ENCODE measurements at regions of chr6 and their contacts with region 1.

Region 1: GRCh38 chr6:123316733-123317323 is 319.9 kb downstream of the TRDN start:
- DNase-seq: no peak
- ATAC-seq: no peak
- H3K4me3 Mint-ChIP-seq: no peak overlapping the region
- H3K27ac Mint-ChIP-seq: no peak overlapping the region
- H3K4me1 Mint-ChIP-seq: no peaks in the 10 kb centered on the region
- H3K27me3 Mint-ChIP-seq: no peaks in the 10 kb centered on the region
- CTCF ChIP-seq: no peak

Region 2: GRCh38 chr6:122381497-122382265 is 935.1 kb before region 1 on chr6:
- CTCF ChIA-PET with region 1: no interaction called
- POLR2A ChIA-PET with region 1: no interaction called
- intact Hi-C with region 1: loop called (anchors 5 kb)
- DNase-seq: no peak
- ATAC-seq: peak; percentile 77
- H3K4me3 Mint-ChIP-seq: no peak overlapping the region
- H3K27ac Mint-ChIP-seq: no peak overlapping the region
- H3K4me1 Mint-ChIP-seq: no peaks in the 10 kb centered on the region
- H3K27me3 Mint-ChIP-seq: peaks cover 15% of the 10 kb centered on the region
- CTCF ChIP-seq: peak; percentile 40

Region 3: DNA sequence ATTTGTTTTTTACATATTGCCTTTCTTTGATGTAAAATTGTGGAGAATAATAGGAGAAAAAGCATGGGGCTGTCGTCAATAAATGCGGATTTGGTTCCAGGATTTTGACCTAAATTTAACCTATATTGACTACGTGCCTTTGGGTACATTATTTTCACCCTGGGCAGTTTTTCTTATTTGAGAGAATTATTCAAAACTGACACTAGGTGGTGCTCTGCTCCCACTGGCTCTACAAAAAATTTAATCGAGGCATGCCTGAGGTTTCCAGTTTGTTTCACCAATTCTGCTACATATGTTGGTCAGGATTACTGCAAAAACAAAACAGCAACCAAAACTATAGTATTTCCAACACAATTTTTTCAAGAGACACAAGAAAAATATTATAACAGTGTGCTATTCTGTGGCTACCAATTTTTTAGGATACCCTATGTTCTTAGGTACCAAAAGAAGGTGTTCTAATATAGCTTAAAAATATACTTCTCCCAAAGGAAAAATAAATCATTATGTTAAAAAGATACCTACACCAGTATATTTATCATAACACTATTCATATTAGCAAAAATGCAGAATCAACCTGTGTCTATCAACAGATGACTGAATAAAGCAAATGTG is 585.9 kb before region 1 on chr6:
- CTCF ChIA-PET with region 1: interaction called, 4 read pairs
- POLR2A ChIA-PET with region 1: no interaction called
- intact Hi-C with region 1: loop called (anchors 1 kb)
- DNase-seq: no peak
- ATAC-seq: no peak
- H3K4me3 Mint-ChIP-seq: no peak overlapping the region
- H3K27ac Mint-ChIP-seq: no peak overlapping the region
- H3K4me1 Mint-ChIP-seq: no peaks in the 10 kb centered on the region
- H3K27me3 Mint-ChIP-seq: peaks cover 5% of the 10 kb centered on the region
- CTCF ChIP-seq: peak; percentile 51

Region 4: GRCh38 chr6:122869437-122870024 is 447.3 kb before region 1 on chr6:
- CTCF ChIA-PET with region 1: no interaction called
- POLR2A ChIA-PET with region 1: no interaction called
- intact Hi-C with region 1: loop called (anchors 1 kb)
- DNase-seq: no peak
- ATAC-seq: no peak
- H3K4me3 Mint-ChIP-seq: no peak overlapping the region
- H3K27ac Mint-ChIP-seq: no peak overlapping the region
- H3K4me1 Mint-ChIP-seq: no peaks in the 10 kb centered on the region
- H3K27me3 Mint-ChIP-seq: peaks cover 1% of the 10 kb centered on the region
- CTCF ChIP-seq: no peak

Region 5: GRCh38 chr6:123242842-123243241 is 74.0 kb before region 1 on chr6:
- CTCF ChIA-PET with region 1: no interaction called
- POLR2A ChIA-PET with region 1: no interaction called
- intact Hi-C with region 1: no loop called
- DNase-seq: no peak
- ATAC-seq: no peak
- H3K4me3 Mint-ChIP-seq: no peak overlapping the region
- H3K27ac Mint-ChIP-seq: no peak overlapping the region
- H3K4me1 Mint-ChIP-seq: no peaks in the 10 kb centered on the region
- H3K27me3 Mint-ChIP-seq: no peaks in the 10 kb centered on the region
- CTCF ChIP-seq: no peak